ENCODE measurements at regions of chr13 and their contacts with region 1.

Region 1: DNA sequence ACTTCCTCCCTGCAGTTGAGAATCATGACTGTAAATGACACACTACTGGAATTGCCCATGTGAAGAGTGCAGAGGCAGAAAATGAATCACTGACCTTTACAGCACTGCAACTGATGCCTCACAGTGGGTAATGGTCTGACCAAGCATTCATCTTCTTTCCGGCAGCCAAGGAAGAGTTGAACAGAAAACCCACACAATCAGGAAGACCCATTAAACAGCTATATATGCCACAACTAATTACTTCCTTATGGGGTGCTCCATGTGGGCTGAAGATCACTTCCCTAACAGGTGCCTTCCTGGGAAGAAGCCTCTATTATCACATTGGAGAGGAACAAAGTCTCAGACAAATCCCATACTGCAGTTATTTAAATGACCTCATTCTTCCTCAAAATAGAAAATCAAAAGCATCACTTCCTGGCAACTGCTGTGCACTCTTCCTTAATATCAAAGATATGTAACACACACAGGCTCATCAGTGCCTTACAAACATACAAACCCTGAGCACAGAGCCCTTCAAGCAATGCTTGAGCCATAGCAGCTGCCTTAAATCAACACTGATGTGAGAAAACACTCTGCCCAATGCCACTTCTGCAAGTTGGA is 45.8 kb downstream of the RUBCNL start:
- DNase-seq: peak; percentile 67
- H3K4me3 Mint-ChIP-seq: peak overlapping the region; percentile 15
- H3K27ac Mint-ChIP-seq: peak overlapping the region; percentile 79
- H3K4me1 Mint-ChIP-seq: peaks cover 38% of the 10 kb centered on the region
- H3K27me3 Mint-ChIP-seq: no peaks in the 10 kb centered on the region

Region 2: DNA sequence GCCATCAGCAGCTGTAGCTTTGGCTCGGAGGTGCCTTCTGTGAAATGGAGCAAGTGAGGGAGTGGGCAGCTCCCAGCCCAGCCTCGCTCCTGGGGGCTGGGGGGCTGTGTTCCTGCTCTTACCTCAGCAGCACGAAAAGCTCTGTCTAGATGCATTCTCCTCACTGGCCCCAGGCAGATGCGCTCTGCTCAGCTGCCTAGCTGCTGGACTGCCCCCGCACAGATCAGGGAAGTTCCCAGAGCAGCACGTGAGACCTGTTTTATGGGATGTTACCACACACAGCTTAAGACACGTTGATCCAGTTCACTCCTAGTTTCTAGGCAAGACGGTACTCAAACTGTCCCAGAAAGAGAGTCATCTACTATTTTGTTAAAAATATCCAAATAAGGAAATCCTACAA is 172.9 kb before region 1 on chr13:
- intact Hi-C with region 1: loop called (anchors 1 kb)
- DNase-seq: peak; percentile 76
- H3K4me3 Mint-ChIP-seq: peak overlapping the region; percentile 82
- H3K27ac Mint-ChIP-seq: peak overlapping the region; percentile 92
- H3K4me1 Mint-ChIP-seq: peaks cover 83% of the 10 kb centered on the region
- H3K27me3 Mint-ChIP-seq: no peaks in the 10 kb centered on the region

Region 3: DNA sequence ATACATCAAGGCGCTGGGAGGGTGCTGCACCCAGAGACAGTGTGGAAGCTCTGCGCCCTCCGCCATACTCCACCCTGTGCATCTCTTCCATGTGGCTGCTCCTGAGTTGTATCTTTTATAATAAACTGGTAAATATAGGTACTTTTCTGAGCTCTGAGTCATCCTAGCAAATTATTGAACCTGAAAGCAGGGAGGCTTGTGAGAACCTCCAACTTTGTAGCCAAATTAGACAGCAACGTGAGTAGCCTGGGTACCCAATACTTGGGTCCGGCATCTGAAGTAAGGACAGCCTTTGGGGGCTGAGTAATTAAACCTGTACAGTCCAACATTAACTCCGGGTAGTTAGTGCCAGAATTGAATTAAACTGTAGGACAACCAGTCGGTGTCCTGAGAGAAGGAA is 11.6 kb before region 1 on chr13:
- intact Hi-C with region 1: loop called (anchors 1 kb)
- DNase-seq: no peak
- H3K4me3 Mint-ChIP-seq: no peak overlapping the region
- H3K27ac Mint-ChIP-seq: no peak overlapping the region
- H3K4me1 Mint-ChIP-seq: peaks cover 52% of the 10 kb centered on the region
- H3K27me3 Mint-ChIP-seq: no peaks in the 10 kb centered on the region

Region 4: DNA sequence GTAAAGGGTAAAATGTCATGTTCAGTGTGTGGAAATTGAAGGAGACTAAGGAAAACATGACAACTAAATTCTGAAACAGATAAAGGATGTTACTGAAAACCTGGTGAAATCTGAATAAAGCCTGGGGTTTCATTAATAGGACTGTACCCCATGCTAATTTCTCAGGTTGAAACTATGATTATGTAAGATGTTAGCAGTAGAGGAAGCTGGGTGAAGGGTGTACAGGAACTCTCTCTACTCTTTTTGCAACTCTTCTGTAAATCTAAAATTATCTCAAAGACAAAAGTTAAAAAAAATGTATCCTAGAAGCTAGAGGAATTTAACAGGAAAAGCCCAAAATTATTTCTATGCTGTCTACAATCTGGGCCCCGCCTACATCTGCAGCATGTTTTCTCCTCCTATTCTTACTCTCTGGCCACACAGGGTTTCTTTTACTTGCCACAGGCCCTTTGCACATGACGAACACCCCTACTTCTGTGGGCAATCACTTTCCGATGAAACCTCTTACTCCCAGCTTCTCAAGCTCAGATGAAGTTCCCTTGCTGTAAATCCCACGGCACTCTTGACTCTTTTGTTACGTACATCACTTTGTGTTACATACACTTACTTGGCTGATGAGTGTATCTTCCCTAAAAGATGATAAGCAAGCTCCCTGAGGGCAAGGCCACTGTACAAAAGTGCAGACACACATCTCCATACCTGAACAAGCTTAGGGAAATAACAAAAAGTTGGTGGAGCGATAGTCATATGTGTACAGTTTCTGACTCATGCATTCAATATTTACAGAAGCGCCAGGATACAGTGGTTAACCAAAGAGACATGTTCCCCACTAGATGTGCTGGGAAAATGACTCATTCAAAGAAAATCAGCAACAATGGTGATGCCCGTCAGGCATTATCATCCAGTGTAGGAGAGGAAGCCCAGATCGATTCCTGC is 13.2 kb after region 1 on chr13:
- intact Hi-C with region 1: loop called (anchors 1 kb)
- DNase-seq: peak; percentile 81
- H3K4me3 Mint-ChIP-seq: peak overlapping the region; percentile 21
- H3K27ac Mint-ChIP-seq: peak overlapping the region; percentile 95
- H3K4me1 Mint-ChIP-seq: peaks cover 14% of the 10 kb centered on the region
- H3K27me3 Mint-ChIP-seq: no peaks in the 10 kb centered on the region

Region 5: DNA sequence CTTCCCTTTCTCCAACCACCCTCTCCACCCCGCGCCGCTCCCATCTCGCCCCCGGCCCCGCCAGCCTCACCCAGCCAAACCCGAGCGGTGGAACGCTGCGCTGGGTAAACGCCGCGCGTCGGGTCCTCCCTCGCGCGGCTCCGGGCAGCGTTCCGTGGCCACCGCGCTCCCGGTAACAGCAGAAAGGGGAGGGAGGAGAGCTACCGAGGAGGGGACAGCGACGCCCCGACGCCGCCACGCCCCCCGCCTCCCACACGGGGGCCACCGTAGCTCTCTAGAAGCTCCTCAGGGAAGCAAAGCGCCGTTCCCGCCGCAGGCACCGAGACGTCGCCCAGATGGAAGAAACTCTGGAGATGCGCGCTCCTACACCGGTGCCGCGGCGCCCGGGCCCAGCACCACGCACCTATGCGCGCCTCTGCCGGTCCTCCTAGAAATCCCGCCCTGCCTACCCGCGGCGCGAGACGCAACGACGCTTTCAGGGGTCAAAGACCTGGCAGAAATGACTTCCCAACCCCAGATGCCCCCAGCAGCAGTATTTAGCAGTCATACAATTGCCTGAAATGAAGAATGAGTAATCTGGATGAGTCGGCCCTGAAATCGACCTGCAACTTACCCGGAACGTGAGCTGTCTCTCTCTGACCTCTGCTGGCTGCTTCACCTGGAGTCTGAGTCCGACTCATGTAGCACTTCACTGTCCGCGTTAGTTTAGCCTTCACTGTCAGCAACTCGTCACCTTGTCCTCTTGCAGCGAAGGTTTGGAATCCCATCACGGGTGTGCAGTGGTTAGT is 46.0 kb after region 1 on chr13 and contains the start of gene RUBCNL:
- intact Hi-C with region 1: loop called (anchors 2 kb)
- DNase-seq: peak; percentile 76
- H3K4me3 Mint-ChIP-seq: peak within 1 kb of the TSS; percentile 91
- H3K27ac Mint-ChIP-seq: no peak within 1 kb of the TSS
- H3K4me1 Mint-ChIP-seq: peaks cover 26% of the 10 kb centered on the region
- H3K27me3 Mint-ChIP-seq: peaks cover 33% of the 10 kb centered on the region
- total RNA-seq, gene RUBCNL: 1.5 TPM in 2 replicates

Region 6: DNA sequence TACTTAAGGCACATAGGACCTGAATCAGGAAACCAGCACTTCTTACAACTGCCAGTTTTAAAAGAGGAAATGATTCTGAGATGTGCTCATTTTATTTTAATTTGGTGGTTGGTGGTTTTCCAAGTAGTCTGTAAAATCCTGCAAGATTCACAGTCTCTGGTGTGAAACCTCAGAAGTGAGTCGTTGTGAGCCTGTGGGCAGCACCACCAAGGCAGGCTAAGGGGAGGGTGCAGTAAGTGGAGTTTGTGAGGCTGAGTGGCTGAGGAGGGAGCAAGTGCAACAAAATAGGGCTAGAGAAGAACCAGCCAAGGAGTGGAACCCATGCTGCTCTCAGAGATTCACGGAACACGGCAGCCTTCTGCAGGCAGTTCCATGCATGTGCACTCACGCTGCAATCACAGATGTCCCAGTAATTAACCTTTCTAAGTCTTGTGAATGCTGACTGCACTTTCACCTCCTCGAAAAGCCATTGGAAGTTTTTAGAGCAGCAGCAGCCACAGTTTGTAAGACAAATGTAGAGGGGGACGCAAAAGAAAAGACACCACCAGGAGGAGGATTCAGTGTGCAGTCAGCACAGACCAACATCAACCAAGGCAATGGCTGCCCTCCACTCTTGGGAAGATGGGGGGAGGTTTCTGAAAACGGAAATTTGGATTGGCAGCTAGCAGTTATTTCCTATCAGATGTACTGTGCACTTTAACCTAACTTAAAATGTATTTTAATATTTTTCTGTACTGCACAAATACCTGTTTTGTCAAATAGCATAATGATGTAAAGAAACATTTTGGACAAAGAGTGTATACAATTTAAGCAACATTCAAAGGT is 410.8 kb after region 1 on chr13:
- intact Hi-C with region 1: loop called (anchors 10 kb)
- DNase-seq: peak; percentile 89
- H3K4me3 Mint-ChIP-seq: peak overlapping the region; percentile 62
- H3K27ac Mint-ChIP-seq: peak overlapping the region; percentile 57
- H3K4me1 Mint-ChIP-seq: peaks cover 33% of the 10 kb centered on the region
- H3K27me3 Mint-ChIP-seq: no peaks in the 10 kb centered on the region

Measured in activated CD4-positive, alpha-beta T cell treated with anti-CD3 and anti-CD28 coated beads, Interleukin-2, amount 10 ng/mL, durations not matched to agents 24 days and 14 days (primary cell).